GM23248 (cell line): ENCODE measurements at regions of chr15 and their contacts with region 1.

Region 1: GRCh38 chr15:83250801-83251200 is 33.7 kb downstream of the BNC1 start:
- DNase-seq: peak; percentile 23
- H3K4me3 ChIP-seq: no peak overlapping the region
- H3K27ac ChIP-seq: no peak overlapping the region
- H3K4me1 ChIP-seq: peaks cover 8% of the 10 kb centered on the region
- H3K27me3 ChIP-seq: peaks cover 24% of the 10 kb centered on the region

Region 2: GRCh38 chr15:83404121-83404520 is 153.3 kb after region 1 on chr15:
- in situ Hi-C with region 1: loop called (anchors 10 kb)
- DNase-seq: no peak
- H3K4me3 ChIP-seq: no peak overlapping the region
- H3K27ac ChIP-seq: no peak overlapping the region
- H3K4me1 ChIP-seq: no peaks in the 10 kb centered on the region
- H3K27me3 ChIP-seq: peaks cover 7% of the 10 kb centered on the region; the same call in 1 of the 2 replicates

Region 3: GRCh38 chr15:83559310-83559966 is 308.6 kb after region 1 on chr15:
- in situ Hi-C with region 1: loop called (anchors 5 kb)
- DNase-seq: peak; percentile 81
- H3K4me3 ChIP-seq: no peak overlapping the region
- H3K27ac ChIP-seq: no peak overlapping the region
- H3K4me1 ChIP-seq: no peaks in the 10 kb centered on the region
- H3K27me3 ChIP-seq: no peaks in the 10 kb centered on the region

Region 4: DNA sequence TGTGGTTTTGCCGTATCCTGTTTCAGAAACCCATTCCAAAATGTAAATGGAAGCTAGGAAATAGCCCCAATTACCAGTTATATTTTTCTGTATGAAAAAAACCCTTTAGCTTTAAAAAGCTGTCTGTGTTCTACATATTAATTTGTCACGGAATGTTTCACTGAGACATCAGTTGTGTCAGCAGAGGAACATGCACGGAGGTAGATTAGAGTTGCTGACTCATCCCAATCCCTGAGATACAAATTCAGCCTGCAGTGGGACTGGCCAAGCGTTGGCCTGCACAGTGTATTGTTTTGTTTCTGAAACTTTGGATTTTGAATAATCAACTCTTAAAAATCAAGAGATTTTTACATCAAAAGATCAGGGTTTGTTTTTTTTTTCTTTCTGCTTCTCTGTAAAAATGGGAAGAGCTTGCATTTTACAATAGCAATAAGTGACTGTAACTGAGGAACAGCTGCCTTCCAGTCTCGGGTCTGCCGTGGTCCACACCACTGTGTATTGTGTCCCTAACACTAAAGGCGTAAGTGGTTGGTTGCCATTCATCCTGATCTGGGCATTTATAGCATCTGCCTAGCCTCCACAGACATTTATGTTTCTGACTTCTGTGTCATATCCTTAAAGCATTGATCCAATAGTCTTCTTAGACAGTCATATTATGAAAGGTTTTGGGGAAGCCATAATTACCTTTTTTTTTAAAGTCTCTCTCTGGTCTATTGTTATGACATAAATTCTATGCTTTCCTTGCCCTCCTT is 621.2 kb after region 1 on chr15:
- in situ Hi-C with region 1: loop called (anchors 25 kb)
- DNase-seq: peak; percentile 90
- H3K4me3 ChIP-seq: no peak overlapping the region
- H3K27ac ChIP-seq: no peak overlapping the region
- H3K4me1 ChIP-seq: peaks cover 12% of the 10 kb centered on the region
- H3K27me3 ChIP-seq: no peaks in the 10 kb centered on the region

Region 5: DNA sequence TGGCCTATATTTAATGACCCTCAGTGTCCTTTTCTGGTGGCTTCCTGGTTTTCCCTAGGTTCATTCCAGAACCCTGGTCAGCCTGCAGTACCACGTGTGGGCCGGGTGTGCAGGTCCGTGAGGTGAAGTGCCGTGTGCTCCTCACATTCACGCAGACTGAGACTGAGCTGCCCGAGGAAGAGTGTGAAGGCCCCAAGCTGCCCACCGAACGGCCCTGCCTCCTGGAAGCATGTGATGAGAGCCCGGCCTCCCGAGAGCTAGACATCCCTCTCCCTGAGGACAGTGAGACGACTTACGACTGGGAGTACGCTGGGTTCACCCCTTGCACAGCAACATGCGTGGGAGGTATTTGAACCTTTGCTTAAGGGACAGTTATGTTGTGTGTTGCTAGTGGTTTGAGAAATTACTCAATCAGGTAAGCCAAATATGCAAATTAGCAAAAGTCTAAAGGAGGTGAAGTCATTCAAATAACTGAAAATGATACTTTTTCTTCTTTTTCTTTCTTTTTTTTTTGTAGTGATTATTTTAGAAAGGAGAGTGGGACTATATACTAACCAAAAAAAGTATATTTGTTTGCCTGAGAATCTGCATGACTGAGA is 662.3 kb after region 1 on chr15:
- in situ Hi-C with region 1: no loop called
- DNase-seq: no peak
- H3K4me3 ChIP-seq: no peak overlapping the region
- H3K27ac ChIP-seq: no peak overlapping the region
- H3K4me1 ChIP-seq: no peaks in the 10 kb centered on the region
- H3K27me3 ChIP-seq: peaks cover 41% of the 10 kb centered on the region